Heart left ventricle (tissue), 16 donors: ENCODE measurements at regions of chr6 and their contacts with region 1.

Region 1: DNA sequence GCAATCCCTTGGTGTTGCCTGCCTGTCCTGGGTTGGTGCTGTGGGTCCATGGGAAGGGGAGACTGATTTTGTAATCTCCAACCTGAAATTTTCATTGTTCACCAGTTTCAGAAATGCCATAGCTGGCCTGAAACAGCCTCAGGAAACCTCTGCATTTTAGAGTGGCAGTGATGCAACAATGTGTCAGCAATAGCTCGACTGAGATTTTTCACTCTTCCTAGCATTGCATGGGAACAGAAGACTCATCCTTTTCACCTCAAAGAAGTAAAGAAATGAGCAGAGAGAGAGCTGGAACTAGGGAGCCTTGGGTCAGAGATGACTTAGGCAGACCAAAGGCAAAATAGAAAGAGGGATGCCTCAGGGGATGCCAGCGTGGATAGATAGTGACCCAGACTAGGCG is 23.7 kb upstream of the TMEM14A start:
- DNase-seq: no peak
- ATAC-seq: no peak
- H3K4me3 ChIP-seq: no peak overlapping the region
- H3K27ac ChIP-seq: no peak overlapping the region
- H3K4me1 ChIP-seq: peaks cover 0 to 8% (median 0%) of the 10 kb centered on the region in 12 donors
- H3K27me3 ChIP-seq: peaks cover 0 to 8% (median 0%) of the 10 kb centered on the region in 9 donors
- CTCF ChIP-seq: no peak
- POLR2A ChIP-seq: no peak

Region 2: DNA sequence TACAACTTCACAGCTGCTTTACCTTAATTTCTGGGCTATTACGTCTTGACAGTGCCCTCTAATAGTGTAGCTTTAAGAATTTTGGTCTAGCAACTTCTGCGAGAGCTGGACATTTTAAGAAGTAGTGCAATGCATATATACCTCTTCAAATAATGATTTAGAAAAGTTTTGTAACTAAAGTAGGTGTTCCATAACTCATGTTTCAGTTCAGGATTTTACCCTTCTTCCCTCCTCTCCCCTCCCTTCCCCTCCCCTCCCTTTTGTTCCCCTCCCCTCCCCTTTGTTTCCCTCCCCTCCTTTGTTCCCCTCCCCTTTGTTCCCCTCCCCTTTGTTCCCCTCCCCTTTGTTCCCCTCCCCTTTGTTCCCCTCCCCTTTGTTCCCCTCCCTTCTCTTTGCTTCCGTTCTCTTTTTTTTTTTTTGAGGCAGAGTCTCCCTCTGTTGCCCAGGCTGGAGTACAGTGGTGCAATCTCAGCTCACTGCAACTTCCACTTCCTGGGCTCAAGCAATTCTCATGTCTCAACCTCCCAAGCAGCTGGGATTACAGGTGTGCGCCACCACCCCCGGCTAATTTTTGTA is 41.5 kb before region 1 on chr6:
- intact Hi-C with region 1: loop called in 3 of 10 experiments (anchors 5 kb)
- DNase-seq: no peak
- ATAC-seq: no peak
- H3K4me3 ChIP-seq: no peak overlapping the region
- H3K27ac ChIP-seq: no peak overlapping the region
- H3K4me1 ChIP-seq: no peaks in the 10 kb centered on the region
- H3K27me3 ChIP-seq: no peaks in the 10 kb centered on the region
- CTCF ChIP-seq: no peak
- POLR2A ChIP-seq: no peak

Region 3: DNA sequence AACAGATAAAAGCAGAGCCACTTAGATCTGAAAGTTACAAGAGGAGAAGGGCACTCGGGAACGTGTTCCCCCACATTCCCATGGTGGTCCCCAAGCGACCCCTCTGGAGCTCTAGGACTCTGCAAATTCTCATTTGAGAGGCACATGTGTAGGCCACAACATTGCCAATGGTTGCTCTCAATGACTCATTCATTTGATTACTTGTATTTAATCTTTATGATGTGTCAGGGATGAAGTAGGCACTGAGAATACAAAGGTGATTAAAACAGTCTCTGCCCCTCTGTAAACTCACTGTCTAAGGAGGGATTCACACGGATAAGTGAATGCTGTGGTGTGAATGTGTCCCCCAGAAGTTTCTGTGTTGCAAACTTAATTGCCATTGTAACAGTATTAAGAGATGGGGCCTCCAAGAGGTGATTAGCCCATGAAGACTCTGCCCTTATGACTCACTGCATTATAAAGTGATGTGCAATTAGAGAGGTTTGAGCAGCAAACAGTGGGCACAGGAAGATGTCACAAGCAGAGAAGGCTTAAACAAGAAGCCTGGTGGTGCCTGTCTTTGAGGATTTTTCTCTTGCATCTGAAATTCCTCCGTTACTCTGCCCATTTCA is 36.3 kb before region 1 on chr6:
- intact Hi-C with region 1: loop called in 3 of 10 experiments (anchors 5 kb)
- DNase-seq: no peak
- ATAC-seq: no peak
- H3K4me3 ChIP-seq: no peak overlapping the region
- H3K27ac ChIP-seq: no peak overlapping the region
- H3K4me1 ChIP-seq: no peaks in the 10 kb centered on the region
- H3K27me3 ChIP-seq: no peaks in the 10 kb centered on the region
- CTCF ChIP-seq: no peak
- POLR2A ChIP-seq: no peak

Region 4: DNA sequence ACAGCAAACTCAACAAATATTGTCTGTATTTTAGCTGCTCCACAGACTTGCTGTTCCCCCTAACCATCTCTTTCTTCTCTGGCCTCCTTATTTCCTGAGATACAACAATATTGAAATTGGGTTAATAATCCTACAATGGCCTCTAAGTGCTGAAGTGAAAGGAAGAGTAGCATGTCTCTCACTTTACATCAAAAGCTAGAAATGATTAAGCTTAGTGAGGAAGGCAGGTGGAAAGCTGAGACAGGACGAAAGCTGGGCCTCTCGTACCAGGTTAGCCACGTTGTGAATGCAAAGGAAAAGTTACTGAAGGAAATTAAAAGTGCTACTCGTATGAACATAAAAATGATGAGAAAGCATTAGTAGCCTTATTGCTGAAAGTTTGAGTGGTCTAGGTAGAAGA is 637.7 kb after region 1 on chr6:
- intact Hi-C with region 1: no loop called
- DNase-seq: no peak
- ATAC-seq: no peak
- H3K4me3 ChIP-seq: no peak overlapping the region
- H3K27ac ChIP-seq: no peak overlapping the region
- H3K4me1 ChIP-seq: peaks cover 0 to 47% (median 25%) of the 10 kb centered on the region in 12 donors
- H3K27me3 ChIP-seq: no peaks in the 10 kb centered on the region
- CTCF ChIP-seq: no peak
- POLR2A ChIP-seq: no peak